ENCODE measurements at regions of chr2 and their contacts with region 1.

Region 1: GRCh38 chr2:128321784-128322714 is 3.4 kb upstream of the HS6ST1 start:
- DNase-seq: peak; percentile 92

Region 2: DNA sequence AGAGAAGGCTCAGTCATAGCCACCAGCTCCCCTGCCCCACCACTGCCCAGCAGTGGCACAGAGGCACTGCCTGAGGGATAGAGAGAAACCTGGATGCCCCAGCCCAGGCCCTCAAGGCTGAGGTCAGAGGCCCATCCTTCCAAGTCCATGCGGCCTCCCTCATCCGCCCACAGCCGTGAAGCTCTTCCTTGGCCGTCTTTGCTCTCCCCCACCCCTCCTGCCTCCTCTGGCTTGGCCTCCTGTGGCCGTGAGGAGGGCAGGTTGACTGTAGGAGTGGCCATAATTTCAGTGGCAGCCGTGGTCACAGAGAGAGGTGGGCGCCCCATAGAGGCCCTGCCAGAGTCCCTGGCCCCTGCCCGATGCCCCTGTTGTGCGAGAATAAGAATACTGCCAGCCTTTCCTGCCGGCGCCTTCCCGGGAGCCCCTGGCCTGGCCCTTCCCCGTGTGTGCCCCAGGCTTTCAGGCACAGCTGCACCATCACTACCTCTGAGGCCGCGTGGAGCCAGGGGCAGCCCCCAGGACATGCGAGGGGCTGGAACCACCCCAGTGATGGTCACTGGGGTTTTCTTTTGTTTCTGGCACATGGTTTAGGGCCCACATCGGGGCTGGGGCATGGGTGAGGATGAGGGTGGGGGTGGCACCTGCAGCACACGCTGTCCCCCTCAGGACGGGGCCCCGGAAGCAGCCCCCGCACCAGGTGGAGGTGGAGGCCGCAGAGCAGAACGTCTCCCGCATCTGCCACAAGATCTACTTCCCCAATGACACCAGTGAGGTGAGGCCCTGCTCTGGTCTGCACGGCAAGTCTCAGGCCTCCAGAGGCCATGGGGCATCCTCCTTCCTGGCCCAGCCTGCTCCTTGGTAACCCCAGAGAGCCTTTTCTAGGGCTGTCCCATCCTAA is 689.2 kb before region 1 on chr2:
- intact Hi-C with region 1: no loop called
- DNase-seq: no peak

Region 3: DNA sequence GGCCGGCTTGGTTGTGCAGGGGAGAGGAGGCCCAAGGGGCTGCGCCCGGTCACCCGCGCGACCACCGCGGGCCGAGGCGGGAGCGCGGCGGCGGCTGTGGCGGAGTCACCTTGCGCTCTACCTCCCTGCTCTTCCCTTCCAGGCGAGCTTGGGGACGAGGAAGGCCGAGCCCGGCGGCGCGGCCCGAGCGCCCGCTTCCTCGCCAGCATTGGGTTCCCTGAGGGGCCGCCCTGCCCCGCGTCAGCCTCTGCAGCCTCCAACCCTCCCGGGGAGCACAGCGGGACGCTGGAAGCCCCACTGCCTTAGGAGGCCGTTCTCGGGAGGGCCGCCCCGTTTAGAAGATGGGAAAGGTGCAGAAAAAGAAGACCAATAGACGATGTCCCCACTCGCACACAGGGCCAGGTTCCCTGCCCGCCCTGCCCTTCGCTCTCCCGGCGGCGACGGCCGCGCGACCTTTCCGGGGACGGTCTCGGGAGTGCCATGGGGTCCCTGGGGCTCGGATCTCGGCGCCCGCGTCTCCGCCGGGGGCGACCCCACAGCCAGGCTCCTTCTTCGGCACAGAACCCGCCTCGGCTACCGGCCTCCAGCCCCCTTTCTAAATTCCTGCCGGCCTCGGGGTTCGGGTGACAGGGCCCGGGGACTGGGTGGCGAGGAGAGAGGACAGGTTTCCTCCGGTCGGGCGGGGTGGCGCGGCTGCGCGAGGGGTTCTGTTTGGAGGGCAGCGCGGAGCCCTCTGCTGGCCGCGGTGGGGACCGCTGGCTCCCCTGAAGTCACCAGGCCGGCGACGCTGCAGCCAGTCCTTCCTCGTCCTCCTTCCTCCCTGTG is 88.9 kb before region 1 on chr2:
- intact Hi-C with region 1: loop called (anchors 5 kb)
- DNase-seq: peak; percentile 96

Region 4: DNA sequence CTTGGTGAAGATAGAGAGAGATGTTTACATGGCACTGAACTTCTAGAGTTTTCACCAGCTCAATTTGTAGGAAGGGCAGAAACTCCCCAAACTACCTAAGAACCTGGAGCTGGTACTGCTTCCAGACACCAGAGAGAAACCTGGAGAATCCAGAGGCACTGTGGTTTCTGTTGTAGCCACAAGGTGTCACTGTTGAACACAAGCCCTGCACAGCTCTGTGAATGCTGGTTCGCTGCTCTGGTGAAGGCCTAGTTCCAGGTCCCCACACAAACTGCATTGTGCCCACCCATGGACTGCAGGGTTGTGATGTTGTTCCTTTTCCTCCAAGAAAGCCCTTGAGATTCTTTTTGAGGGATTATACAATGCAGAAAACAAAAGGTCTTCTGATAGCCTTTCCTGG is 147.2 kb after region 1 on chr2:
- intact Hi-C with region 1: loop called (anchors 10 kb)
- DNase-seq: peak; percentile 47

Region 5: GRCh38 chr2:128531856-128532255 is 209.8 kb after region 1 on chr2:
- intact Hi-C with region 1: loop called (anchors 2 kb)
- DNase-seq: no peak

Region 6: GRCh38 chr2:129396980-129397599 is 1075.0 kb after region 1 on chr2:
- intact Hi-C with region 1: loop called (anchors 10 kb)
- DNase-seq: no peak